Left colon (tissue), 2 donors: ENCODE measurements at regions of chr11 and their contacts with region 1.

Region 1: DNA sequence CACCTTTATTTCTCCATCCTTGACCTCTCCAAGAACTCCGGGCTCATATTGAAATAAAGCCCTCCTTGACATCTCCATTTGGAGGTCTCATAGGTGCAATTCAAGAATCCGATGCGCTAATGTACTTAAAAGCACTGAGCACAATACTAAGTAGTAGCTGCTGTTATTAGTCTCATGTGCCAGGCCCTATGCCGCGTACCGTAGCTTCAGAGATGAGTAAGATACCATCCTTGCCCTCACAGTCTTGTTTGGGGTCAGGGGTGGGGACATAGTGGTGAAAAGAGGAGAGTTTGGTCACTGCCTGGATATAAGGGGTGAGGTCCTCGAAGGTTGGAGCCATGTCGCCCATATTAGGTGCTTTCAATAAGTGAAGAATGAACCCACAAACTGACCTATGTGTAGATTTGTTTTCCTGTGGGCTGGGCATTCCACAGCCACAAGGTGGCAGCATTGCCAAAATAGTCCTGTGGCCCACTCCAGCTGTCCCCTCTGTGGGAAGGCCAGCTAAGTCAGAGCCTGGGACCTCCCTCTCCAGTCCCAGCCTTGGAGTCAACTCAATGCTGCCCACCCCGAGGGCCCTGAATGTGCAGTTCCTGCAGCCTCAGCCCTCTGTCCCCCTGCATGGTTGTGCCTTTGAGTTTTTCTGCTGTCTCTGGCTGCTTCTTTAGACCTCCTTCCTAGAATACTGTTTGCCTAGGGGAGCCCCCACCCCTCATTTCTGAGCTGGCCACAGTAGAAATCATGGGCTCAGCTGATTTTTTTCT is 6.5 kb downstream of the DCPS start:
- DNase-seq: peak; percentile 68 to 83
- ATAC-seq: peak; percentile 78

Region 2: DNA sequence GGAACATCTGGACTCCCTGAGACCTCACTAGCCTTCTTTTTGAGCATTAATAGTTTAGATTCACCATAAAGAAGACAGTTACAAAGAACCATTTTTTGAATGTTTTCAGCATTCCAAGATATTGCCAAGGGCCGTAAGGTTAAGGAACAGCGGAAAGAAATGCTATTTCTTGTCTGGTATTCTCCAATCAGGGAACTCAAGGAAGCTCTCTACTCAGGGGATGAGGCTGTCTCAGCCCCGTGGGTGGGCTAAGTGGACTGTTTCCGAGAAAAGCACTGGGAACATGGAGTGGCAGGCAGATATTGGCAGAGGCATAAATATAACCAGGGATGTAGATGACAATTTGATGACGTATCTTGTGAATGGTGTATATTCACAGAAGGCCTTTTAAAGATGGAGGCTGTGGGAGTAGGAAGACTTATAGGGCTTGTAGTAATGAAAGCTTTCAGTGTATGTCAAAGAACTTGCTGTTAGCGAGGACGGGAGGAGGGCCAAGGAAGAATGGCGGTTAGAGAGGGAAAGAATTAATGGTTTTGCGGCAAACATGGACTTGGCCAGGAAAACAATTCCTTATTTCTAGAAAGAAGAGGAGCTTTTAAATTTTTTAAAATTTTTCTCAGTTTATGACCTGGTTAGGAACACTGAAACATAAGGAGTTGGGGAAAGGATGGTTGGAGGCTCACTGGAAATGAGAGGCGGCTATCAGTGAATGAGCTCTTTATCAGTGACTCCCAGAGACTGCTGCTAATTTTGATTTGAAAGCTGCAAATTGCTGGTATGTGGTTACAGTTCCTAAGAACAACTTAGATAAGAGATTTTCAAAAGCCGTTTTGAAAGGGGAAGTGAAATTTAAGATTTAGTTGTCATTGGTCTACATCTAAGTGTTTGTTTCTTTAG is 109.6 kb after region 1 on chr11:
- intact Hi-C with region 1: loop called in 1 of 2 experiments (anchors 10 kb)
- DNase-seq: no peak
- ATAC-seq: no peak